ENCODE measurements at regions of chr7 and their contacts with region 1.

Region 1: GRCh38 chr7:30564243-30564892 is 30.3 kb upstream of the GARS1 start:
- DNase-seq: peak; percentile 90
- ATAC-seq: peak; percentile 96
- H3K4me3 Mint-ChIP-seq: no peak overlapping the region
- H3K27ac Mint-ChIP-seq: peak overlapping the region; percentile 83; the same call in 1 of the 2 replicates
- H3K4me1 Mint-ChIP-seq: peaks cover 30% of the 10 kb centered on the region
- H3K27me3 Mint-ChIP-seq: no peaks in the 10 kb centered on the region
- CTCF ChIP-seq: peak; percentile 88

Region 2: DNA sequence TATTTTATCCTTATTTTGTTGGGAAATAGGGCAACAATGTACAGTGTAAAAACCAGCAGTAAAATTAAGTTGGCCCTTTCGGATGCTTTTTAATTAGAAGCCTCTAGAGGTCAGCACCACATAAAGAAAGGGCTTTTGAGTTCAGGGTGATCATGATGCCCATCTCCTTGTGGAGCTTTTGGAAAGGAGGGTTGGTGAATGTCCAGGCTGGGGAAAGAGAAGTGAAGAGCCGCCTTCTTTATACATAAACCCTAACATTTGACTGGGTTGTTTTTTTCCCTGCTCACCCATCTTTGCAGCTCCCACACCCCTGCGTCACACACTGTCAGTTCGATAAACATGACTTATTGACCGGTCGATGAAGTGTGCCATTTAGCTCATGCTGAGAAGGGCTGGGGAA is 399.8 kb before region 1 on chr7:
- CTCF ChIA-PET with region 1: interaction called, 15 read pairs
- POLR2A ChIA-PET with region 1: no interaction called
- DNase-seq: no peak
- ATAC-seq: peak; percentile 43
- H3K4me3 Mint-ChIP-seq: no peak overlapping the region
- H3K27ac Mint-ChIP-seq: no peak overlapping the region; the same call in 1 of the 2 replicates
- H3K4me1 Mint-ChIP-seq: peaks cover 75% of the 10 kb centered on the region
- H3K27me3 Mint-ChIP-seq: peaks cover 18% of the 10 kb centered on the region
- CTCF ChIP-seq: no peak

Region 3: DNA sequence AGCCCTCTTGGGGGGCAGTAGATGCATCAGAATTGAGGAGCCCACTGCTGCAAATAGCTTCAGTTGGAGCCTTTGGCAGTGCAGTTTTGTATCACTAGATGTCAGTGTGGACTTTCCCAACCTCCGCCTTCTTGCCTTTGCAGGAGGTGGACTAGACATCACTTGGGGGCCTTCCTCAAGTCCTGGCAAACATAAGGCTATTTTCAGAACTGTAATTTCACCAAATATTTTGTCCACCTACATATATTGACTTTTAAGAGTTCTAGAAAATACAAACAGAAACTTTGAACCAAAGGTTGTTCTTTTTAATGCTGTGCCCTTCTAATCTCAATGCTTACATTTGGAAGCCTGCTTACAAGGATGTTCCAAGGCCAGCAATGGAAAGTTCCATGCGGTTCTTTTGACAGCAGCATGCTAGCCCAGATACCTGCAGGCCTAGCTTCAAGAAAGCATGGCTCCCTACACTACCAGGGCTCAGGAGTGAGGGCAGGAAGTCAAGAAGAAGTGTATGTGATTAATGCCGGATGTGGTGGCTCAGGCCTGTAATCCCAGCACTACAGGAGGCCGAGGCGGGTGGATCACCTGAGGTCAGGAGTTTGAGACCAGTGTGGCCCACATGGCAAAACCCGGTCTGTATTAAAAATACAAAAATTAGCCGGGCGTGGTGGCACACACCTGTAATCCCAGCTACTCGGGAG is 288.0 kb before region 1 on chr7:
- CTCF ChIA-PET with region 1: interaction called, 49 read pairs
- POLR2A ChIA-PET with region 1: no interaction called
- DNase-seq: peak; percentile 60
- ATAC-seq: peak; percentile 97
- H3K4me3 Mint-ChIP-seq: no peak overlapping the region
- H3K27ac Mint-ChIP-seq: no peak overlapping the region
- H3K4me1 Mint-ChIP-seq: peaks cover 11% of the 10 kb centered on the region
- H3K27me3 Mint-ChIP-seq: no peaks in the 10 kb centered on the region
- CTCF ChIP-seq: peak; percentile 35; the same call in 1 of the 2 replicates

Region 4: DNA sequence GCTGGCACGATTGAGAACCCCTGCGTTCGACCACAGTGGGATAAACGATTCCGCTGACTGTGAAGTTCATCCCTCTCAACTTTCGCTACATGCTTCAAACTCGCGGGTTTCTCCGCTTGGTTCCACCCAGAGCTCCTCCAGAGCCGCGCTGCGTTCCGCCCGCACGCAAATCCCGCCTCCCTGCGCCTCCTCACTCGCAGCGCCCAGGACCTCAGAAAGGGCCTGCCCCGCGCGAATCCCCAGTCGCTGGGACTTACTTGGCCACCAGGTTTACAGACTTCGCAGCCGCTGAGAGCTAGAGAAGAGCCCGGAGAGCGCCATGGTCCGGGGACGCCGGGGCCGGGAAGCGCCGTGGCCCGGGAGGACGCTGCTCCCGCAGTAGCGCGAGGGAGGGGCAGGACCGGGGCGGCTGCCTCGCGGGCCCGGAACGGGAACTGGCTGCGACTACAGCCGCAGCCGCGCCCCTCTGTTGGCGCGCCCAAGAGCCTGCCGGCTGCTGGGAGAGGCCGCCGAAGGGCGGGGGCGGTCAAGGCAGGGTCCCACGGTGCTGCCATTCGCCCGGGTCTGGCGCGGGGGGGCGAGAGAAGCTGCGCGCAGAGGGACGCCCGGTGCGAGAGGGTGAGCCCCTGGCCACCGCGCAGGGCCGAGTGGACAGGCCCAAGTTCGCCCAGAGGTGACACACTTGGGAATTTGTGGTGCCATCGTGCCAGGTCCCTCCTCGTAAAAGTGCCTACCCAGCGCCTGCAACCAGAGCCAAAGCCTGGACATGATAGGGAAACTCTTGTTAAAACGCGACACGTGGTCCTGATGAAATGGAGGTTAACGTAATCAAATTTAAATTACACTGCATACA is 85.8 kb before region 1 on chr7 and contains the start of gene NOD1:
- CTCF ChIA-PET with region 1: interaction called, 11 read pairs
- POLR2A ChIA-PET with region 1: no interaction called
- DNase-seq: peak; percentile 76
- ATAC-seq: peak; percentile 94
- H3K4me3 Mint-ChIP-seq: peak within 1 kb of the TSS; percentile 80
- H3K27ac Mint-ChIP-seq: no peak within 1 kb of the TSS
- H3K4me1 Mint-ChIP-seq: peaks cover 15% of the 10 kb centered on the region
- H3K27me3 Mint-ChIP-seq: peaks cover 12% of the 10 kb centered on the region
- CTCF ChIP-seq: no peak
- total RNA-seq, gene NOD1: 6.0 to 6.4 TPM (median 6.3 TPM) in 3 replicates

Region 5: GRCh38 chr7:30510124-30511075 is 54.0 kb before region 1 on chr7:
- CTCF ChIA-PET with region 1: interaction called, 37 read pairs
- POLR2A ChIA-PET with region 1: no interaction called
- DNase-seq: peak; percentile 26
- ATAC-seq: peak; percentile 80
- H3K4me3 Mint-ChIP-seq: no peak overlapping the region
- H3K27ac Mint-ChIP-seq: no peak overlapping the region
- H3K4me1 Mint-ChIP-seq: peaks cover 10% of the 10 kb centered on the region
- H3K27me3 Mint-ChIP-seq: peaks cover 19% of the 10 kb centered on the region
- CTCF ChIP-seq: peak; percentile 58

Region 6: DNA sequence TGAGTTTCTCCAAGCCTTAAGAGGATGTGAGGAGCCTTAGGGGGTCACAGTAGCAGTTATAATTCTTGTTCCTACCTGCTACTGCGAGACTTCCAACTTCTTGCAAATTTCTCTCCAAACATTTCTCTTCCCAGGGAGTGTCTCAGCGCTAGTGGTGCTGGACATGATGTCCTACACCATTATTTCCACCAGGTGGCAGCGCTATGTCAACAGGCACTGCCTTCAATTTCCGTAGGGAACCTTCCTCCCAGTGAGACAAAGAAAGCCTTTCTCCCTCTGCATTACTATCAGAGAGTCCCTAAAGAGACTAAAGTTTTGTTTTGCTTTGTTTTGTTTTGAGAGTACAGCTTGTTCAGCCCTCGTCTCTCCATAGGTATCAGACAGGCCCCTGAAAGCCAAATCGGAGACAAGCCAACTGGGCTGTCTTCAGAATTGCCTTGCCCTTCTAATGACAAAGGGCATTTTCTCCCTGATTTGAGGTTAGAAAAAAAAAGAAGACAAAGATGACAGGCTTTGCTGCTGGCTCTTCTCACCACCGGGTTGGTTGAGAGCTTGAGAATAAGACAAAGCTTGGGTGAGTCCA is 15.5 kb before region 1 on chr7:
- CTCF ChIA-PET with region 1: interaction called, 74 read pairs
- POLR2A ChIA-PET with region 1: interaction called, 3 read pairs
- DNase-seq: peak; percentile 78
- ATAC-seq: peak; percentile 96
- H3K4me3 Mint-ChIP-seq: no peak overlapping the region
- H3K27ac Mint-ChIP-seq: peak overlapping the region; percentile 90
- H3K4me1 Mint-ChIP-seq: peaks cover 29% of the 10 kb centered on the region
- H3K27me3 Mint-ChIP-seq: peaks cover 5% of the 10 kb centered on the region
- CTCF ChIP-seq: peak; percentile 75

Region 7: GRCh38 chr7:30604901-30605300 is 40.5 kb after region 1 on chr7:
- CTCF ChIA-PET with region 1: no interaction called
- POLR2A ChIA-PET with region 1: no interaction called
- DNase-seq: no peak
- ATAC-seq: no peak
- H3K4me3 Mint-ChIP-seq: no peak overlapping the region
- H3K27ac Mint-ChIP-seq: no peak overlapping the region
- H3K4me1 Mint-ChIP-seq: no peaks in the 10 kb centered on the region
- H3K27me3 Mint-ChIP-seq: no peaks in the 10 kb centered on the region
- CTCF ChIP-seq: no peak